Caco-2 (cell line): ENCODE measurements at regions of chr11 and their contacts with region 1.

Region 1: GRCh38 chr11:74870485-74870884 is 78.4 kb downstream of the XRRA1 start:
- DNase-seq: peak in 1 of 2 experiments; percentile 80
- H3K4me3 ChIP-seq: no peak overlapping the region
- H3K4me3 Mint-ChIP-seq: no peak overlapping the region
- H3K27ac Mint-ChIP-seq: no peak overlapping the region
- H3K4me1 ChIP-seq: no peaks in the 10 kb centered on the region
- H3K4me1 Mint-ChIP-seq: no peaks in the 10 kb centered on the region
- H3K27me3 ChIP-seq: no peaks in the 10 kb centered on the region
- H3K27me3 Mint-ChIP-seq: no peaks in the 10 kb centered on the region
- CTCF ChIP-seq: peak; percentile 61 to 96

Region 2: GRCh38 chr11:74611369-74611861 is 259.1 kb before region 1 on chr11:
- CTCF ChIA-PET with region 1: no interaction called
- POLR2A ChIA-PET with region 1: no interaction called
- intact Hi-C with region 1: loop called (anchors 5 kb)
- DNase-seq: peak in 1 of 2 experiments; percentile 43
- H3K4me3 ChIP-seq: no peak overlapping the region
- H3K4me3 Mint-ChIP-seq: no peak overlapping the region
- H3K27ac Mint-ChIP-seq: no peak overlapping the region
- H3K4me1 ChIP-seq: no peaks in the 10 kb centered on the region; the same call in none of the 2 replicates
- H3K4me1 Mint-ChIP-seq: no peaks in the 10 kb centered on the region
- H3K27me3 ChIP-seq: no peaks in the 10 kb centered on the region
- H3K27me3 Mint-ChIP-seq: no peaks in the 10 kb centered on the region
- CTCF ChIP-seq: peak; percentile 67 to 70

Region 3: DNA sequence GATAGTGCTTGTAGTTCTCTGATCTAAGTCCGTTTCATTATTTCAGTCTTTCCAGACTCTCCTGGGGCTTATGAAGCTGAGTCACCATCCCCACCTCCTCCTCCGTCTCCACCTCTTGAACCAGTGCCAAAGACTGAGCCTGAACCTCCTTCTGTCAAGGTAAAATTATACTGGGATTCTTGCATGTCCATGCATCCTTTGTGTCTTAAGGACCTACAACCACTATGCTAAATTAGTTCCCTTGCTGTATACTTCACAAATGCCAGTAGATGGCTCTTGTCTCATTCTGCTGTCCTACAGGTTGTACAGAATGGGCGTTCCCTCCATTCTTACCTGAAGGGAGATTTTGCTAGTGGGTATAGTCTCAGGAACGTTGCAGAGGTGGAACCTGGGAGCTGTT is 235.9 kb before region 1 on chr11:
- CTCF ChIA-PET with region 1: no interaction called
- POLR2A ChIA-PET with region 1: no interaction called
- intact Hi-C with region 1: loop called (anchors 1 kb)
- DNase-seq: peak in 1 of 2 experiments; percentile 41
- H3K4me3 ChIP-seq: no peak overlapping the region
- H3K4me3 Mint-ChIP-seq: no peak overlapping the region
- H3K27ac Mint-ChIP-seq: no peak overlapping the region
- H3K4me1 ChIP-seq: no peaks in the 10 kb centered on the region
- H3K4me1 Mint-ChIP-seq: no peaks in the 10 kb centered on the region
- H3K27me3 ChIP-seq: no peaks in the 10 kb centered on the region
- H3K27me3 Mint-ChIP-seq: no peaks in the 10 kb centered on the region
- CTCF ChIP-seq: peak; percentile 43 to 65

Region 4: GRCh38 chr11:74726547-74727182 is 143.8 kb before region 1 on chr11:
- CTCF ChIA-PET with region 1: no interaction called
- POLR2A ChIA-PET with region 1: no interaction called
- intact Hi-C with region 1: loop called (anchors 1 kb)
- DNase-seq: peak; percentile 84 to 89
- H3K4me3 ChIP-seq: no peak overlapping the region
- H3K4me3 Mint-ChIP-seq: no peak overlapping the region
- H3K27ac Mint-ChIP-seq: no peak overlapping the region
- H3K4me1 ChIP-seq: 0 out of 2 replicates have a peak, but pooled peaks cover 7% of the 10 kb centered on the region
- H3K4me1 Mint-ChIP-seq: peaks cover 13% of the 10 kb centered on the region
- H3K27me3 ChIP-seq: no peaks in the 10 kb centered on the region
- H3K27me3 Mint-ChIP-seq: peaks cover 15% of the 10 kb centered on the region
- CTCF ChIP-seq: peak; percentile 98 to 100